ENCODE measurements at regions of chr1 and their contacts with region 1.

Region 1: DNA sequence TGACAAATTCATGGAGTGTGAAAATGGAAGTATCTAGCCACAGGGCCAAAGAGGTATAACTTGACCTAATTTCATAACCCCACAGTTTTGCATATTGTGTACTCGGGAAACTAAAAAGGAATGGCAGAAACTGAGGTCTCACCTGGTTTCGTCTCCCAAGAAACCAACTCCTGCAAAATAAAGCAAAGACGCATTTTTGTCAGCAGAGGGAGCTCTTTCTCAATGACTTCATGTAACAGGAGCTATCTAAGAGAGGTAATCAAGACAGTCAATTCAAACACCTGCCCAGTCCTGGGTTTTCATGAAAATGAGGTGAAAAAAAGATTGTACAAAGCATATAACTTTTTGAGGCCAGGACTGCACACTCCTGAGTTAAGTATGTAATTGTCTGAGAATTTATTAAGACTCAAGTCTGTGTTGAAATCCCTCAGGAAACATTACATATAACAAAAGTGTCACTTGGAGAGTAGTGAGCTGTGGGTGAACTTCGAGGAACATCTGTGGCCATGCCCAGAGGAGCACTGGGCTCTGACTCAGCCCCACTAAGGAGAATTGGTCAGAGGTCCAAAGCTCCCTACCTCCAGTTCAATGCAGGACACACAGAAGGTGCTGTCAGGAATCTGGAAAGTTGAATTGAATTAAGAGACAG is 17.6 kb downstream of the FCRL4 start:
- DNase-seq: peak; percentile 13
- ATAC-seq: no peak
- H3K4me3 Mint-ChIP-seq: no peak overlapping the region
- H3K27ac Mint-ChIP-seq: no peak overlapping the region
- H3K4me1 Mint-ChIP-seq: no peaks in the 10 kb centered on the region
- H3K27me3 Mint-ChIP-seq: peaks cover 9% of the 10 kb centered on the region

Region 2: DNA sequence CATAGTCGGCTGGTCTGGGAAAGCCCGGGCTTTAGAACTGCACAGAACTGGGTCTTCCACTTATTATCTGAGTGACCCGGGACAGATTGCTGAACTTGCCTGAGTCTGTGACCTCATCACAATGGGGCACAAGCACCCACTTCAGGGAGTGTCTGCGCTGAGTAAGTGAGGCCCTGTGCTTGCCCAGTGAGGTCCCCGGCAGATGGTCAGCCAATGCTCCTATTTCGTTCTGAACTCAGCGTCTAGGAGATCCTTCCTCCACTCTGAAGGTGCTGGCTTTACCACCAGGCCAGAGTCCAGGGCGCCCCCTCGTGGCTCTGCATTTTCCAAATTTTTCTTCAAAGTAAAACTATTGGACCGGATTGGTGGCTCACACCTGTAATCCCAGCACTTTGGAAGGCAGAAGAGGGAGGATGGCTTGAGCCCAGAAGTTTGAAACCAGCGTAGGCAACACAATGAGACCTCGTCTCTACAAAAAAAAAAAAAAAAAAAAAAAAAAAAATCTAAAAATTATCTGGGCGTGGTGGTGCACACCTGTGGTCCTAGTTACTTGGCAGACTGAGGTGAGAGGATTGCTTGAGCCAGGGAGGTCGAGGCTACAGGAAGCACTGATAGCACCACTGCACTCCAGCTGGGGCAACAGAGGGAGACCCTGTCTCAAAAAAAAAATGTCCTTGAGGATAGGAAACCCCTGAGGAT is 89.7 kb before region 1 on chr1:
- CTCF ChIA-PET with region 1: no interaction called
- POLR2A ChIA-PET with region 1: no interaction called
- intact Hi-C with region 1: no loop called
- DNase-seq: peak; percentile 83
- ATAC-seq: no peak
- H3K4me3 Mint-ChIP-seq: no peak overlapping the region
- H3K27ac Mint-ChIP-seq: no peak overlapping the region
- H3K4me1 Mint-ChIP-seq: no peaks in the 10 kb centered on the region
- H3K27me3 Mint-ChIP-seq: peaks cover 20% of the 10 kb centered on the region

Region 3: GRCh38 chr1:157566484-157567300 is 13.6 kb before region 1 on chr1:
- CTCF ChIA-PET with region 1: interaction called, 13 read pairs
- POLR2A ChIA-PET with region 1: no interaction called
- intact Hi-C with region 1: no loop called
- DNase-seq: no peak
- ATAC-seq: no peak
- H3K4me3 Mint-ChIP-seq: no peak overlapping the region
- H3K27ac Mint-ChIP-seq: no peak overlapping the region
- H3K4me1 Mint-ChIP-seq: no peaks in the 10 kb centered on the region
- H3K27me3 Mint-ChIP-seq: peaks cover 13% of the 10 kb centered on the region

Region 4: GRCh38 chr1:157626099-157626498 is 45.8 kb after region 1 on chr1:
- CTCF ChIA-PET with region 1: interaction called, 9 read pairs
- POLR2A ChIA-PET with region 1: no interaction called
- intact Hi-C with region 1: loop called (anchors 1 kb)
- DNase-seq: peak; percentile 67
- ATAC-seq: peak; percentile 69
- H3K4me3 Mint-ChIP-seq: no peak overlapping the region
- H3K27ac Mint-ChIP-seq: no peak overlapping the region
- H3K4me1 Mint-ChIP-seq: no peaks in the 10 kb centered on the region
- H3K27me3 Mint-ChIP-seq: peaks cover 15% of the 10 kb centered on the region

Region 5: GRCh38 chr1:157773493-157774350 is 193.4 kb after region 1 on chr1:
- CTCF ChIA-PET with region 1: interaction called, 6 read pairs
- POLR2A ChIA-PET with region 1: no interaction called
- intact Hi-C with region 1: loop called (anchors 1 to 10 kb)
- DNase-seq: no peak
- ATAC-seq: peak; percentile 57
- H3K4me3 Mint-ChIP-seq: no peak overlapping the region
- H3K27ac Mint-ChIP-seq: no peak overlapping the region
- H3K4me1 Mint-ChIP-seq: peaks cover 2% of the 10 kb centered on the region
- H3K27me3 Mint-ChIP-seq: peaks cover 12% of the 10 kb centered on the region

Region 6: GRCh38 chr1:158124999-158125398 is 544.7 kb after region 1 on chr1:
- CTCF ChIA-PET with region 1: interaction called, 14 read pairs
- POLR2A ChIA-PET with region 1: no interaction called
- intact Hi-C with region 1: loop called in 1 of 2 experiments (anchors 1 kb)
- DNase-seq: peak; percentile 82
- ATAC-seq: peak; percentile 95
- H3K4me3 Mint-ChIP-seq: no peak overlapping the region
- H3K27ac Mint-ChIP-seq: no peak overlapping the region
- H3K4me1 Mint-ChIP-seq: no peaks in the 10 kb centered on the region
- H3K27me3 Mint-ChIP-seq: peaks cover 16% of the 10 kb centered on the region

Region 7: GRCh38 chr1:158771950-158772866 is 1191.9 kb after region 1 on chr1 and contains the start of gene OR6N1:
- CTCF ChIA-PET with region 1: no interaction called
- POLR2A ChIA-PET with region 1: no interaction called
- intact Hi-C with region 1: no loop called
- DNase-seq: no peak
- ATAC-seq: no peak
- H3K4me3 Mint-ChIP-seq: no peak within 1 kb of the TSS
- H3K27ac Mint-ChIP-seq: no peak within 1 kb of the TSS
- H3K4me1 Mint-ChIP-seq: no peaks in the 10 kb centered on the region
- H3K27me3 Mint-ChIP-seq: peaks cover 12% of the 10 kb centered on the region
- total RNA-seq, gene OR6N1: not detected

Measured in activated CD4-positive, alpha-beta T cell treated with anti-CD3 and anti-CD28 coated beads for 36 hours (primary cell).